ENCODE measurements at regions of chrX and their contacts with region 1.

Region 1: DNA sequence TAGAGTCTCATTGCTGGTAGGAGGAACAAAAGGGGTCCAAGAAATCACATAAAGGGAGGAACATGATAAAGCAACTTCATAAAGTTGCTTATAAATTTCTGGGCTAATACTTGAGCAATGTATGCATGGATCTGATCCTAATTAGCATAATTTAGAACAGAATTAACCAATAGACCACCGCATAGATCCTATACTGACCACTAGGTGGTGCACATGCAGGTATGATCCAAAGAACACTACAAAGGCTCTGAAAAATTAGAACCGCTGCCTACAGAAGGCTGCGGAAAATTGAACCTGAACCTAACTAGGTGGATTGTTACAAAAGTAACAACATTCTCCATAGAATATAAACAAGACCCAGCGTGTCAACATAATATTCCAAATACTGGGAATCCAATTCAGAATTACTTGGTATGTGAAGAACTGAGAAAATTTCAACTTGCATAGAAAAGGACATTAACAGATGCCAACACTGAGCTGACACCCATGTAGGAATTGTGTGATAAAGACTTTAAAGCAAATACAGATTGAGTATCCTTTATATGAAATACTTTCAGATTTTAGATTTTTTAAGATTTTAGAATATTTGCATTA is 23.3 kb downstream of the BRCC3 start:
- DNase-seq: peak; percentile 57
- H3K4me3 ChIP-seq: no peak overlapping the region
- H3K27ac ChIP-seq: no peak overlapping the region
- H3K4me1 ChIP-seq: no peaks in the 10 kb centered on the region
- H3K27me3 ChIP-seq: no peaks in the 10 kb centered on the region
- CTCF ChIP-seq: peak; percentile 78
- EP300 ChIP-seq: no peak
- RAD21 ChIP-seq: peak; percentile 60

Region 2: GRCh38 chrX:155105919-155106318 is 11.4 kb after region 1 on chrX:
- CTCF ChIA-PET with region 1: interaction called, 10 read pairs
- POLR2A ChIA-PET with region 1: no interaction called
- DNase-seq: no peak
- H3K4me3 ChIP-seq: no peak overlapping the region
- H3K27ac ChIP-seq: no peak overlapping the region
- H3K4me1 ChIP-seq: no peaks in the 10 kb centered on the region
- H3K27me3 ChIP-seq: no peaks in the 10 kb centered on the region
- CTCF ChIP-seq: no peak
- EP300 ChIP-seq: no peak
- RAD21 ChIP-seq: no peak

Measured in SK-N-SH (cell line).